ENCODE measurements at regions of chr16 and their contacts with region 1.

Region 1: DNA sequence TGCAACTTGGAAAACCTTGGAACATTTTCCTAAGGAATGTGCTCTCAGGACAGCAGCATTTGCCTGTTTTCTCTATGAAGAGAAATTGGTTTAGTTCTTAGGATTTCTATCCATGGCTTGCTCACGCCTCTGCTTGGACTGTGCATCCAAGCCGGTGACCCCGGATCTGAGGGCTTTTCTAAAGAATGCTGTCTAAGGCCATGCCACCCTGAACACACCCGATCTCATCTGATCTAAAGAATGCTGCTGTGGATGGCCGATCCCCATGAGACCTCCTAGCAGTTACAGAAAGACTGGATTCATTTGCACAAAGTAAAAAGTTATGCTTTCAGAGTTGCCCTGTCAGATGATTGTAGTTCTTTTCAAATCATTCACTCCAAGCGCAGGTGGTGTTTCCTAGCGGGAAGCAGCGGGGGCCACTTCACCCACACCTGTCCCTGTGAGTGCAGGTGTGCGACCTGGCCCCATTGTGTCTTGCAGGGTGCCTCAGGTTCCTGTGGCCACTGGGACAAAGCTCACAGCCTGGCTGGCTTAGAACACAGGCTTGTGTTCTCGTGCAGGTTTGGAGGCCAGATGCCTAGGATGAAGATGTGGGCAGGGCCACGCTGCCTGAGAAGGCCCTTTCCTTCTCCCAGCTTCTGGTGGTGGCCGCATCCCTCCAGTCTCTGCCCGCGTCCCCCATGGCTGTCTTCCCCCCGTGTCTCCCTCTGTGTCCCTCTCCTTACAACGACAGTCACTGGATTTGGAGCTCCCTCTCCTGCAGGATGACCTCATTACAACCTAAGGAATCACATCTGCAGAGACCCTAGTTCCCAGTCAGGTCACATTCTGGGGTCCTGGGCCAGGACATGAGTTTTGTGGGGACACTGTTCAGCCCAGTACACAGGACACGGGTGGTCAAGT is 90.6 kb downstream of the NPIPB11 start:
- DNase-seq: no peak
- H3K4me3 Mint-ChIP-seq: no peak overlapping the region
- H3K27ac Mint-ChIP-seq: no peak overlapping the region
- H3K4me1 Mint-ChIP-seq: no peaks in the 10 kb centered on the region
- H3K27me3 Mint-ChIP-seq: no peaks in the 10 kb centered on the region
- CTCF ChIP-seq: peak; percentile 21

Region 2: DNA sequence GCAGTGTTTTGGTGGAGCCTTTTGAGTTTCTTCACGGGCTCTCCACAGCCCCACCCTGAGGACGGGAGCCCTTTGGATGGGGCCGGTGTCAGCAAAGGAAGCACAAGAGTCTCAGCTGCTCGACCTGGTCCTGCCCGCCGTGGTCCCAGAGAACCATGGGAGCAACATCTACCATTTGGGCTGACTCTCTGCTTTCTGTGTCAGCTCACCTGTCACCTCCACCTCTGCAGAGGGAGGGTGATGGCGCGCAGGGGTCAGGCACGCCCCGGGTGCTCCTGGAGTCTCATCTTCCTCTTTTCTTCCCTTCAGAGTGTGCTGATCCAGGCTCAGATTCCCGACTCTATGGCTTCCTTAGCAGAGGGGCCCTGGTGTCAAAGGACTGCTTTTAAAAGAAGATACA is 159.4 kb before region 1 on chr16:
- CTCF ChIA-PET with region 1: no interaction called
- POLR2A ChIA-PET with region 1: no interaction called
- intact Hi-C with region 1: no loop called
- DNase-seq: no peak
- H3K4me3 Mint-ChIP-seq: no peak overlapping the region
- H3K27ac Mint-ChIP-seq: peak overlapping the region; percentile 97
- H3K4me1 Mint-ChIP-seq: peaks cover 14% of the 10 kb centered on the region
- H3K27me3 Mint-ChIP-seq: no peaks in the 10 kb centered on the region
- CTCF ChIP-seq: no peak

Region 3: DNA sequence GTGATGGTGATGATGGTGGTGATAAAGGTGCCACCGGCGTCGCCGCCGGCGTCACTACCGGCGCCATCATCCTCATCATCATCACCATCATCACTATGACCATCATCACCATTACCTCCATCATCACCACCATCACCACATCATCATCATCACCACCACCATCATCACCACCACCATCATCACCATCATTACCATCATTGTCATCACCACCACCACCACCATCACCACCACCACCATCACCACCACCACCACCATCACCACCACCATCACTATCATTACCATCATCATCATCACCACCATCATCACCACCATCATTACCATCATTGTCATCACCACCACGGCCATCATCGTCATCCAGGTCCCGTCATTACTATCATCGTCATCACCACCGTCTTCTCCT is 89.1 kb before region 1 on chr16:
- CTCF ChIA-PET with region 1: no interaction called
- POLR2A ChIA-PET with region 1: no interaction called
- intact Hi-C with region 1: loop called (anchors 5 kb)
- DNase-seq: no peak
- H3K4me3 Mint-ChIP-seq: no peak overlapping the region
- H3K27ac Mint-ChIP-seq: no peak overlapping the region
- H3K4me1 Mint-ChIP-seq: peaks cover 5% of the 10 kb centered on the region
- H3K27me3 Mint-ChIP-seq: no peaks in the 10 kb centered on the region
- CTCF ChIP-seq: no peak

Measured in MCF 10A (cell line).